Activated T-helper 1 cell treated with anti-CD3 and anti-CD28 coated beads, Interleukin-12 subunit alpha, Interleukin-12 subunit beta, Interleukin-2, Interleukin-4 antibody, amounts not matched to agents 30 ng/mL and 10 ng/mL and 1 ng/mL, durations not matched to agents 14 hours and 24 hours and 36 hours (primary cell): ENCODE measurements at regions of chr5 and their contacts with region 1.

Region 1: DNA sequence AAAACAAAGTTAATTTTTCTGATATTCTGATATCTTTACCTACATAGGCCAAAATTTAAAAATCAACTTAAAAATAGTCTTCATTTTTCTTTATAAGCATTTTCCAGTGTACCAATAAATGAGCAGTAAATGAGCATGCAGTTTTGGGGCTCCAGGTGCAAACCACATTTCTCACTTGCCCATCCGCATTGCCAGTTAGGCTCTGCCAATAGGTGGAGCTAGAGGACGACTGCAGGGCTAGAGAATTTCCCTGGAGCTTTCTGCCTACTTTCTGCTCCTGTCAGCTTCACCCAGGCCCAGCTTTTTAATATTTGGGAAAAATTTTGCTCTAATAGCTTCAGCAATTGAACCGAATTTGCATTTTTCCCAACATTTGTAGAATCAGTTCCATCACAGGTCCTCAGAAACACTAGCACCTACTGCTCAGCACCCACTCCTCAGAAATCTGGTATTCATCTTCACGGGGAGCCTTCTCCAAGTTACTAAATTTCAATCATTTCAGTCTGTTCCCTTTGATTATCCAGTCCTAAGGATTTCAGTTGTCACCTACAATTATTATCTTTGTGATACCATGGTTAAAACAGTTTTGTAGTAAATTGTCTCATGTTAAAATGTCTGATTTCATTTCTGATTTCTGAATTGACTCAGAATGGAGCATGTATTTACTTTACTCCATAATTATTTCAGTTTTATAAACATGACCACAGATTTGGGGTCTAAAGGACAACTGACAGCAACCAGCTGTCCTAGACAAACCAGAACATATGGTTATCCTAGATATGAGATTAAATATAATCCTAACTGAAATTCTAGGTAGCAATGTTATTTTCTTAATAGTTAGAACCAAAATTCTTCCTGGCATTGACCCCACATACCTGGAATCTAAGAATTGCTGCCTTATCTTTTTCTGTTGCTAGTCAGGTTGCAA is 104.6 kb upstream of the FAM174A start:
- DNase-seq: peak; percentile 5
- H3K4me3 Mint-ChIP-seq: no peak overlapping the region
- H3K27ac Mint-ChIP-seq: no peak overlapping the region
- H3K4me1 Mint-ChIP-seq: no peaks in the 10 kb centered on the region
- H3K27me3 Mint-ChIP-seq: peaks cover 4% of the 10 kb centered on the region

Region 2: GRCh38 chr5:101045689-101046088 is 615.2 kb after region 1 on chr5:
- intact Hi-C with region 1: loop called (anchors 1 kb)
- DNase-seq: no peak
- H3K4me3 Mint-ChIP-seq: no peak overlapping the region
- H3K27ac Mint-ChIP-seq: no peak overlapping the region
- H3K4me1 Mint-ChIP-seq: peaks cover 9% of the 10 kb centered on the region
- H3K27me3 Mint-ChIP-seq: peaks cover 3% of the 10 kb centered on the region

Region 3: DNA sequence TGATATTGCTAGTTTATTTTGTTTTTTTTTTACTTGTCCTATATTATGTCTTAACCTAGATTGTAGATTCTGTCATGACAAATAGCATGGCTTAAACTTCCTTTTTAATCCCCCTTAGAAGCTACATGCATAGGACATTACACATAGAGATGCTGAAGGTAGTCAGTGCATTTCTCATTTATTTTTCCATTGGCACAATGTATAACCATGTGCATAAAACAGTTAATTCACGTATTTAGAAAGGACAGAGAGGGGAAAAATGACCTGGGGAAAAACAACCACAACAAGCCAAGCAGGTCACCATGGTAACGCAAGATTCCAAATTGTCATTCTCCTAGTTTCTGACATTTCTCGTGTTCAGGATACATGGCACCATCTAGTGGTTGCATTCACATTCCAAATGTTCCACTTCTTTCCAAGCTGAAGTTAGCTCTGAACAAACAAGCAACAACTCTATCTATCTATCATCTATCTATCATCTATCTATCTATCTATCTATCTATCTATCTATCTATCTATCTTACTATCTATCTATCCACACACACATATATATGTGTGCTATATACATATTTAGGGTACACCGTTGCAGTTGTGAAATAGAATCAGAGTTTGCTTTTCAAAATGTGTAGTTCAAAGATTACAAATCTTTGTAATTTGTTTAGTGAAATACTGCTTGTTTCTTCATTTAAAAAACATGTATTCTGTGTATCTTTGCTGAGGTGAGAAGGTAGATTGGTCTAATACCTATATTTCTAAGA is 959.8 kb after region 1 on chr5:
- intact Hi-C with region 1: loop called (anchors 1 kb)
- DNase-seq: no peak
- H3K4me3 Mint-ChIP-seq: no peak overlapping the region
- H3K27ac Mint-ChIP-seq: no peak overlapping the region
- H3K4me1 Mint-ChIP-seq: no peaks in the 10 kb centered on the region
- H3K27me3 Mint-ChIP-seq: no peaks in the 10 kb centered on the region

Region 4: GRCh38 chr5:101678481-101679193 is 1248.1 kb after region 1 on chr5:
- intact Hi-C with region 1: loop called (anchors 2 kb)
- DNase-seq: no peak
- H3K4me3 Mint-ChIP-seq: no peak overlapping the region
- H3K27ac Mint-ChIP-seq: no peak overlapping the region
- H3K4me1 Mint-ChIP-seq: no peaks in the 10 kb centered on the region
- H3K27me3 Mint-ChIP-seq: peaks cover 2% of the 10 kb centered on the region